ENCODE measurements at regions of chr19 and their contacts with region 1.

Region 1: DNA sequence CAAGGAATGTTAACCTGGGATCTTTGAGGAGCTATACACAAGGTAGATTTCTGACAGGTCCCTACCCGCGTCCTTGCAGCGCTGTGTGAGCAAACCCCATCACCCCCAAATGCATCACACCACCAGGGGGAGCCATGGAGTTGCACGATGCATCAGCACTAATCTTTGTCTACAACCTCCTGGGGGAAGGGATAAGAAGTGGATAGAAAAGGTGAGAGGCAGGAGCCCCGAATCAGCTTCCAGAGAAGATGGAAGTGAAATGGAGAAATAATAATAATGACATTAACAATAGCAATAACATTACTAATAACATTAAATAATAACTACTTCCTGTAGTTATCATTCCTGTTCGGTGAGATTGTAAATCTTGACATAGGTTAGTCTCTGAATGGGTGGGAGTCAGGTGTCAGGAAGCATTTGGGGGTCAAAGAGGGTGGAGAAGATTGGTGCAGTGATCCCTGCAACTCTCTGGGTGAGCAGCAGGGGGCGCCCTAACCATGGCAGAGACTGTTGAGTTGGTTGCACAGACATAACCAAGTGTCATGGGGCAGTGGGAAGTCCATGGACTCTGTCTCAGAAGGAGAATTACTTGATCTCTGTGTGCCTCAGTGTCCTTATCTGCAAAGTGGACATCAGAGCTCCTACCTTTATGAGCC is 16.5 kb downstream of the SIGLEC7 start:
- DNase-seq: no peak

Region 2: GRCh38 chr19:50817941-50818858 is 340.4 kb before region 1 on chr19:
- intact Hi-C with region 1: no loop called
- DNase-seq: no peak

Region 3: GRCh38 chr19:51086153-51086850 is 72.3 kb before region 1 on chr19:
- intact Hi-C with region 1: loop called in 1 of 2 experiments (anchors 2 kb)
- DNase-seq: peak; percentile 38